Gastrocnemius medialis (tissue), 4 donors: ENCODE measurements at regions of chr18 and their contacts with region 1.

Region 1: DNA sequence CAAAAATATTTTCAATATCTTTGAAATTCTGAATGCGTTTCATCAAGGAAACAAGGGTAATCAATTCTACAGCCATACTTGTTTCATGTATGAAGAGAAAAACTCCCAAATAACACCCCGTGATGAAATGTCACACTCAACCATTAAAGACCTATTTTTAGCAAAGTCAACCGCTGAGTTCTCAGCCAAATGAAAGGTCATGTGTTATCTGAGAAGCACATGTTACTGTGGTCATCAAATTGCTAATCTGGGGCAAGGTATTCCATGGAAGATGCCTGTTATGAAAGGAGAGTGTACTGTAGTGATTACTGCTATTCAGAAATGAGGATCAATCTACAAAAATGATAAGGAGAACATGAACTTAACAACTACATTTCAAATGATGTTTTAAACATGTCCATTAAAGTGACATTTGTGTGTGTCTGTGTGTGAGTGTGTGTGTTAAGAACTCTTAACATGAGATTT is 126.7 kb downstream of the BCL2 start:
- DNase-seq: peak; percentile 28 to 55
- ATAC-seq: peak; percentile 97 to 98
- H3K4me3 ChIP-seq: no peak overlapping the region
- H3K27ac ChIP-seq: peak overlapping the region; percentile 81 to 90 (median 85)
- H3K4me1 ChIP-seq: peaks cover 29 to 41% of the 10 kb centered on the region in 2 donors
- H3K27me3 ChIP-seq: no peaks in the 10 kb centered on the region
- CTCF ChIP-seq: no peak
- POLR2A ChIP-seq: no peak

Region 2: GRCh38 chr18:62437235-62438017 is 755.5 kb before region 1 on chr18:
- in situ Hi-C with region 1: no loop called
- intact Hi-C with region 1: loop called (anchors 5 kb)
- DNase-seq: peak; percentile 89 to 96
- ATAC-seq: peak; percentile 90 to 95
- H3K4me3 ChIP-seq: peak overlapping the region; percentile 1 to 47 (median 28)
- H3K27ac ChIP-seq: peak overlapping the region; percentile 84 to 92 (median 92)
- H3K4me1 ChIP-seq: peaks cover 18 to 33% of the 10 kb centered on the region in 2 donors
- H3K27me3 ChIP-seq: no peaks in the 10 kb centered on the region
- CTCF ChIP-seq: no peak
- POLR2A ChIP-seq: peak; percentile 20 to 28

Region 3: GRCh38 chr18:63025251-63026090 is 167.4 kb before region 1 on chr18:
- in situ Hi-C with region 1: no loop called
- intact Hi-C with region 1: no loop called
- DNase-seq: no peak
- ATAC-seq: peak; percentile 51 to 52
- H3K4me3 ChIP-seq: no peak overlapping the region
- H3K27ac ChIP-seq: no peak overlapping the region
- H3K4me1 ChIP-seq: no peaks in the 10 kb centered on the region
- H3K27me3 ChIP-seq: no peaks in the 10 kb centered on the region
- CTCF ChIP-seq: peak in 3 of 5 experiments; percentile 13 to 51 (median 39)
- POLR2A ChIP-seq: no peak

Region 4: GRCh38 chr18:63098018-63098981 is 94.6 kb before region 1 on chr18:
- in situ Hi-C with region 1: no loop called
- intact Hi-C with region 1: no loop called
- DNase-seq: no peak
- ATAC-seq: no peak
- H3K4me3 ChIP-seq: no peak overlapping the region
- H3K27ac ChIP-seq: no peak overlapping the region
- H3K4me1 ChIP-seq: peaks cover 9 to 15% of the 10 kb centered on the region in 2 donors
- H3K27me3 ChIP-seq: no peaks in the 10 kb centered on the region
- CTCF ChIP-seq: no peak
- POLR2A ChIP-seq: no peak

Region 5: DNA sequence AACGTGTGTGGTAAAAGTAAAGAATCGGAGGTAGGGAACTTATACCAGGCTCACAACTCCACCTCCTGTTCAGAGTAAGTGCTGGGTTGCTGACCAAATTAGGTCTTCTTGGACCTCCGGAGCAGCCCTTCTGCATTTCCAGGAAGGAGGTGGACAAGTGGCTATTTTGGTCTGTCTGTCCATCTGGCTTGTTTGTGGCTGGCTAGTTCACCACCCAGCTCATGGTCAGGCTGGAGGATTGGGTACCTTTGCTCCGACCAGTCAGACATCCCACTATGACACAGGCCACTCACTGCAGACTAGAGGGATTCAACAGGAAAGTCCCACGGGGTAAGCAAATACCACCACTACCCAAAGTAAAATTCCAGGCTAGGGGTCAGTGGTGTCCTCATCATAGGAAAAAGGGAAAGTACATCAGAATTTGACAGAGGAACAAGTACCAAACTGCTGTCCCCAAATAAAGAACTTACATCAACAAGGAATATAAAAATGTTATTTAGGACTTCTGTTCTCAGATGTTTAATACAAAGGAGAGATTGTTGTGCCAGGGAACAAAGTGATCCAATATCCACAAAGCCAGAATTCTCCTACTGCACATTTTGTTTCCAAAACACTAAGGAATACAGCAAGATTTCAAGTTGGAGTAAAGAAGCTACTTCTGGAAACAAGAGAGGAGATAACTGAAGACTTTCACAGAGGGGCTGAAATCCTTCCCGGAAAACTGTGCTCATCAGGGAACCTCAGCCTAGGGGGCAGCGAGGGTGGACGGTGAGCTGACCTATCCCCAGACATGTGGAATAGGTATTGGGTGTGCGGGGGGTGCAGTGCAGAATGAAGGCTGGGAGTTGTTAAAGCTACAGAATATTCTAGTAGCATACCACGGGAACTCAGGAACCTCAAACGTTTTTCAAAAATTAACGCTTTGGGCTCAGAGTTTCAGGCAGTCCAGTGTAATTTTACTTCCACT is 69.7 kb after region 1 on chr18:
- in situ Hi-C with region 1: no loop called
- intact Hi-C with region 1: loop called (anchors 5 kb)
- DNase-seq: peak; percentile 56 to 72
- ATAC-seq: peak; percentile 67 to 80
- H3K4me3 ChIP-seq: peak overlapping the region in 3 of 4 donors; percentile 10 to 31 (median 16)
- H3K27ac ChIP-seq: peak overlapping the region; percentile 69 to 84 (median 82)
- H3K4me1 ChIP-seq: peaks cover 54 to 61% of the 10 kb centered on the region in 2 donors
- H3K27me3 ChIP-seq: no peaks in the 10 kb centered on the region
- CTCF ChIP-seq: peak in 3 of 5 experiments; percentile 7 to 26 (median 14)
- POLR2A ChIP-seq: peak in 1 of 2 donors; percentile 24